ENCODE measurements at regions of chr6 and their contacts with region 1.

Region 1: GRCh38 chr6:15441215-15441868 is 195.5 kb downstream of the JARID2 start:
- DNase-seq: peak; percentile 78
- ATAC-seq: peak; percentile 63
- H3K4me3 ChIP-seq: no peak overlapping the region
- H3K27ac ChIP-seq: no peak overlapping the region
- H3K4me1 ChIP-seq: peaks cover 19% of the 10 kb centered on the region
- H3K27me3 ChIP-seq: no peaks in the 10 kb centered on the region
- CTCF ChIP-seq: peak; percentile 84
- POLR2A ChIP-seq: no peak
- RAD21 ChIP-seq: peak; percentile 83

Region 2: GRCh38 chr6:14841901-14842421 is 599.4 kb before region 1 on chr6:
- CTCF ChIA-PET with region 1: no interaction called
- POLR2A ChIA-PET with region 1: no interaction called
- dilution Hi-C with region 1: no loop called
- in situ Hi-C with region 1: no loop called
- intact Hi-C with region 1: loop called (anchors 10 kb)
- DNase-seq: peak; percentile 100
- ATAC-seq: peak; percentile 91
- H3K4me3 ChIP-seq: no peak overlapping the region
- H3K27ac ChIP-seq: peak overlapping the region; percentile 59; the same call in 1 of the 2 replicates
- H3K4me1 ChIP-seq: peaks cover 7% of the 10 kb centered on the region
- H3K27me3 ChIP-seq: no peaks in the 10 kb centered on the region
- CTCF ChIP-seq: no peak
- POLR2A ChIP-seq: no peak
- RAD21 ChIP-seq: peak; percentile 12

Region 3: DNA sequence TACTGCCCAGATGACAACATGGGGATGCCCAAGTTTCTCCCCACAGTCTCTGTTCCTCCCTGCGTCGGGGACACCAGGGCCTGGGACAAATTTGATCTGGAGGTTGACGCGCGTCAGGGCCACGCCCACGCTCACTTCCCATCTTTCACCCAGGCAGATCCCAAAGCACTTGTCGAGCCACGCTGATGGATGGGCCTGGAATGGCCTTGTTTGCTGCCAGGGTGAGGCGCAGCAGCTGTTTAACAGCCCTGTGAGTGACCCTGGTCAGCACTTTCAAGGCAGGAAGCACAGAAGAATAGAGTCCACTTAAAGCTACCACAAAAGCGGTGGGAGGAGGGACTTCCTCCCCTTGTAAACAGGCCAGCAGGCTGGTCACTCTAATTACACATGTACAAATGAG is 520.2 kb before region 1 on chr6:
- CTCF ChIA-PET with region 1: no interaction called
- POLR2A ChIA-PET with region 1: no interaction called
- dilution Hi-C with region 1: no loop called
- in situ Hi-C with region 1: no loop called
- intact Hi-C with region 1: loop called (anchors 10 kb)
- DNase-seq: peak; percentile 12
- ATAC-seq: no peak
- H3K4me3 ChIP-seq: no peak overlapping the region
- H3K27ac ChIP-seq: no peak overlapping the region
- H3K4me1 ChIP-seq: peaks cover 16% of the 10 kb centered on the region
- H3K27me3 ChIP-seq: no peaks in the 10 kb centered on the region
- CTCF ChIP-seq: no peak
- POLR2A ChIP-seq: no peak
- RAD21 ChIP-seq: no peak

Region 4: DNA sequence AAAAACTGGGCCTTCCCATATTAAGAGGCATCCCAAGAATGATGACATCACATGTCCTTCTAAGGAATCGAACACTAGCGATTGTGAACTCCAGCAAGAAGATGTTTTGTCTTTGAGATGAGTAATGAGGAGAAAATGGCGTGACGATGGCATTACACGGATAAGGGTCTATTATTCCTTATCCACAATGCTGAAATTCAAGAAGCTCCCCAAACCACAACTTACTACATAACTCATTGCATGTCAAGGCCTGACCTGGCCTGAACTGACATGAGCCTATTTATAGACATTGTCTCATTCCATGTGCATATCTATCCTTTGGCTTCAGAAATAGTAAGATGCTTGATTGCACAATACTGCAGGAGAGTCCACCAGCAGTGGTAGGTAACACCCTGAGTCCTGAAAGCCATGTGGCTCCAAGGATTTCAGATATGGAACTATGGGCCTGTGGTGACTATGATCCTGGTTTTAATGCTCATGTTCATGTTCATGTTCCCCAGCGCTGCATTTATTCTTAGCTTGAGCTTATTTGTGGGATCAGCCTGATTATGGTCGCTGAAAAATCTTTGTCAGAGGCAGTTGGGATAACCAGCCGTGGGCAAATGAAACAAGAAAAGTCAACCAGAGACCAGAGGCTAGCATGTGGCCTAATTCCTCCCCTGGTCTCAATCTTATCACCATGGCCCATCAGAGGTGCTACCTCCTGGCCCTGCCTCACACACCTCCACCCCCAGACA is 378.7 kb before region 1 on chr6:
- CTCF ChIA-PET with region 1: no interaction called
- POLR2A ChIA-PET with region 1: no interaction called
- dilution Hi-C with region 1: no loop called
- in situ Hi-C with region 1: no loop called
- intact Hi-C with region 1: loop called (anchors 5 kb)
- DNase-seq: peak; percentile 99
- ATAC-seq: peak; percentile 4; the same call in 1 of the 2 replicates
- H3K4me3 ChIP-seq: no peak overlapping the region
- H3K27ac ChIP-seq: no peak overlapping the region
- H3K4me1 ChIP-seq: peaks cover 21% of the 10 kb centered on the region
- H3K27me3 ChIP-seq: no peaks in the 10 kb centered on the region
- CTCF ChIP-seq: no peak
- POLR2A ChIP-seq: no peak
- RAD21 ChIP-seq: no peak

Region 5: GRCh38 chr6:15399641-15400470 is 41.5 kb before region 1 on chr6:
- CTCF ChIA-PET with region 1: no interaction called
- POLR2A ChIA-PET with region 1: no interaction called
- dilution Hi-C with region 1: no loop called
- in situ Hi-C with region 1: no loop called
- intact Hi-C with region 1: loop called (anchors 5 kb)
- DNase-seq: peak; percentile 82
- ATAC-seq: peak; percentile 90
- H3K4me3 ChIP-seq: no peak overlapping the region
- H3K27ac ChIP-seq: no peak overlapping the region; the same call in 1 of the 2 replicates
- H3K4me1 ChIP-seq: peaks cover 13% of the 10 kb centered on the region
- H3K27me3 ChIP-seq: no peaks in the 10 kb centered on the region
- CTCF ChIP-seq: no peak
- POLR2A ChIP-seq: no peak
- RAD21 ChIP-seq: no peak

Region 6: GRCh38 chr6:15491255-15491985 is 50.1 kb after region 1 on chr6:
- CTCF ChIA-PET with region 1: no interaction called
- POLR2A ChIA-PET with region 1: interaction called, 3 read pairs
- dilution Hi-C with region 1: no loop called
- in situ Hi-C with region 1: no loop called
- intact Hi-C with region 1: loop called (anchors 1 kb)
- DNase-seq: peak; percentile 78
- ATAC-seq: peak; percentile 91
- H3K4me3 ChIP-seq: no peak overlapping the region
- H3K27ac ChIP-seq: peak overlapping the region; percentile 30; the same call in 1 of the 2 replicates
- H3K4me1 ChIP-seq: peaks cover 13% of the 10 kb centered on the region
- H3K27me3 ChIP-seq: no peaks in the 10 kb centered on the region
- CTCF ChIP-seq: peak; percentile 91
- POLR2A ChIP-seq: no peak
- RAD21 ChIP-seq: peak; percentile 90

Measured in IMR-90 (cell line).